CD14-positive monocyte (primary cell): ENCODE measurements at regions of chr22 and their contacts with region 1.

Region 1: DNA sequence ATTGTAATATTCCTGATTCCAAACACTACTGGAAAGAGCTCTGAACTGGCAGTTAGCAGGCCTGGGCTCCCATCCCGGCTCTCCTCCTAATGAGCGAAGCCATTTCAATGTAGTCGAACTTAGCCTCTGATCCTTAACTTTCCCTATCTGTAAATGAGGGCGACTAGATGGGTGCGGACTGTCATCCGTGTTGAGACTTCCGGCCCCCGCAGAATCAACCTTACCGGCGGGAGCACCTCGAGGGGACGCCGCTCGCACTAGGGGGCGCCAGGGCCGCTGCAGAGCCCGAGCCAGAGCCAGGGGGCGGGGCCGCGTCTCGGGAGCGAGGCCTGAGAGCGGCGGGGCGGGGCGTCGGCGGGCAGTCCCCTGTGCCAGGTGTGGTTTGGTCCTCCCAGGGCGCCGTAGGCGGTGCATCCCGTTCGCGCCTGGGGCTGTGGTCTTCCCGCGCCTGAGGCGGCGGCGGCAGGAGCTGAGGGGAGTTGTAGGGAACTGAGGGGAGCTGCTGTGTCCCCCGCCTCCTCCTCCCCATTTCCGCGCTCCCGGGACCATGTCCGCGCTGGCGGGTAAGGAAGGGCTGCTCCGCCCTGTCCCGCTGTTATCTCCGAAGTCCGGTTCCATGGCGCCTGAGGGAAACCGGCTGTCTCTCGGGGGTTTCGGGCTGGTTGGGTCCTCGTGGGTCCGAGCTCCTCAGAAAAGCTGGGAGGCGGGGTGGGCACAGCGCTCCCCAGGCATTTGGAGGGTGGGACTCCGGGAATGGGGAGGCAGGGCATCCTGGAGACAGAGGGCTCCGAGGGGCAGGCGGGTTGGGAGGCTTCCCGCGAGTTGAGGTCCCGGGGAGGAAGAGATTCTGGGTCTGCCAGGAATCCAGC is at the start of gene LIMK2:
- DNase-seq: peak; percentile 80 to 89 (median 88)
- H3K4me3 ChIP-seq: peak within 1 kb of the TSS; percentile 71 to 97 (median 94)
- H3K4me3 Mint-ChIP-seq: peak within 1 kb of the TSS; percentile 91 to 93
- H3K27ac ChIP-seq: peak within 1 kb of the TSS; percentile 76 to 92
- H3K27ac Mint-ChIP-seq: peak within 1 kb of the TSS; percentile 86 to 97 (median 93)
- H3K4me1 ChIP-seq: peaks cover 61 to 69% of the 10 kb centered on the region in 2 donors
- H3K4me1 Mint-ChIP-seq: peaks cover 62% of the 10 kb centered on the region
- H3K27me3 ChIP-seq: no peaks in the 10 kb centered on the region
- H3K27me3 Mint-ChIP-seq: peaks cover 0 to 6% (median 0%) of the 10 kb centered on the region in 3 donors
- CTCF ChIP-seq: peak; percentile 84
- polyA plus RNA-seq, gene LIMK2: 5.5 to 14.2 (median 10.1) TPM

Region 2: GRCh38 chr22:31173386-31174145 is 38.5 kb before region 1 on chr22:
- intact Hi-C with region 1: loop called in 1 of 2 experiments (anchors 5 kb)
- DNase-seq: peak in 1 of 3 donors; percentile 27
- H3K4me3 ChIP-seq: no peak overlapping the region
- H3K4me3 Mint-ChIP-seq: no peak overlapping the region
- H3K27ac ChIP-seq: peak overlapping the region in 1 of 2 donors; percentile 75
- H3K27ac Mint-ChIP-seq: peak overlapping the region in 5 of 7 donors; percentile 15 to 66 (median 40)
- H3K4me1 ChIP-seq: peaks cover 15 to 23% of the 10 kb centered on the region in 2 donors
- H3K4me1 Mint-ChIP-seq: peaks cover 24% of the 10 kb centered on the region
- H3K27me3 ChIP-seq: no peaks in the 10 kb centered on the region
- H3K27me3 Mint-ChIP-seq: no peaks in the 10 kb centered on the region
- CTCF ChIP-seq: no peak

Region 3: GRCh38 chr22:31290494-31291471 is 78.7 kb after region 1 on chr22:
- intact Hi-C with region 1: loop called in 1 of 2 experiments (anchors 5 kb)
- DNase-seq: peak; percentile 86 to 93 (median 91)
- H3K4me3 ChIP-seq: peak overlapping the region; percentile 68 to 96 (median 94)
- H3K4me3 Mint-ChIP-seq: peak overlapping the region; percentile 92 to 97
- H3K27ac ChIP-seq: peak overlapping the region; percentile 96 to 99
- H3K27ac Mint-ChIP-seq: peak overlapping the region; percentile 99 to 100 (median 99)
- H3K4me1 ChIP-seq: peaks cover 74 to 92% of the 10 kb centered on the region in 2 donors
- H3K4me1 Mint-ChIP-seq: peaks cover 67% of the 10 kb centered on the region
- H3K27me3 ChIP-seq: no peaks in the 10 kb centered on the region
- H3K27me3 Mint-ChIP-seq: peaks cover 0 to 5% (median 3%) of the 10 kb centered on the region in 3 donors
- CTCF ChIP-seq: no peak